ENCODE measurements at regions of chr12 and their contacts with region 1.

Region 1: DNA sequence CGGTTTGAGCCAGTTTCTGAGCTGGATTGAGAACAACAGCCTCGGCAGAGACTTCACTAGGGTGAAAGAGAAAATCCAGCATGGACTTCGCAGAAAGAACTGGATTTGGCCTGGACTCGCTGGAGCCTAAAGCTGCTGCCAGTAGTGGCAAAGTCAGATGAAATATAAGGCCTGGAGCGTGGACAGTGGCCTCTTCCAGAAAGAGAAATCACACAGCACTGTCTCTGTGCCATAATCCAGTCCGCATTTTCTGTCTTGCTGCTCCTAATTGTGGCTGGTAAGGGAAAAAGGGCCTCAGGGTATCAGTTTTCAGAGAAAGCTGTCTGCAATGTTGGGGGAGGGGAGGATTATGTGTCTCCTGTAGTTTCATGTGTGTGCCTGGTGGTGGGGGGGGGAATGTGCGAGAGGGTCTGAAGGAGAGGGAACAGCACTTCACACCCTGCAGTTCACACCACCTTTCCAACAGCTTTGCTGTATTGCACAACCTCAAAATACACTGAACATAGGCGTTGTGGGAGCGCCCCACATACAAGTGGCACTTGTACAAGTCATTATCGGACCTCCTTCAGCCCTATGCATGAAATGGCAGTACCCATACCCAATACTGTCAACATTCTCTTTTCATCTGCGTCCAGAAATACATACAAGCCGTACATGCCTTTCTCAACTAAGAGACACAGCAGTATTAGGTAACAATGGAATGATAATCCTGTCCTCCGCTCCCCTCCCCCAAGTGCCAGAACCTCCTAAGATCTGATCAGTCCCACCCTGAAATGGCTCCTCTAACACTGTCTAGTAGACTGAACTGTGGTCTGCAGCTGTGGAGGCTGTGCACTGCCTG is 107.5 kb upstream of the ATF7IP start:
- DNase-seq: peak; percentile 48
- CTCF ChIP-seq: no peak

Region 2: DNA sequence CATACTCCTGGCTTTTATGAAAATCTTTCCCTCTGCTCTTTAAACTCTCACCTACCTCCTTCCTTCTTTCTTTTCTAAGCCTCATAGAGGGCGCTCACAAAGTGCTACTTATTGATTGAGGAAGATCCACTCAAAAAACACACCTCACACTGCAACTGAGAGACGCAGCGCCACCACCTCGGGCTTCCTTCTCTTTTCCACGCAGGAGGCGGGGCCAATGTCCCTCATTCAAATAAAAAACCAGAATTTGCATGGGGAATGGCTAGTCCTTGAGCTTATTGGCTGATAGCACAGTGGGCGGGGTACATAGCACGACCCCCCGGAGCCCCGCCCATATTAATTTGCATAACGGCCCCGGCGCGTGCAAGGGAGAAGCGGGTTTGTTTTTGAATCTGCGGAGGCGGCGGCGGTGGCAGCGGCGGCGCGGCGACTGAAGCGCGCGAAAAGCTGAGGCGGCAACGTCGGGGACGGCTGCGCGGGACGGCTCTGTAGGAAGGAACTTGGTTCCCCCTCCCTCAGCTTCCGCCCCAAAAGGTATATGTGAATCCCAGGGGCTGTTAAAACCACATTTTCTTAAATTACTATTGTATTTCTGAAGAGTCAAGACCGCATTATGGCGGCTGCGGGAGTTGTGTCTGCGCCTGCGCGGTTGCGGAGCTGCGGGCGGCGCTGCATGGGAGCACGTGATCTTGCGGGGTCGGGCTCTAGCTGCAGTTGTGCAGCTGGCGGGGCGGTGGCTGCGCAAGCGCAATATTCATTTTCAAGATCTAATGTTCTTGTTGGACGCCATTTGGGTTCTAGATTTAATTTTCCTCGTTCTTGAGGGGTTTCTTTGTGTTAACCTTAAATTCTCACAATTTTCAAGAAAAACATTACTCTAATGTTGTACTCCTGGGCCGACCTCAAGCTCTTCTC is 107.6 kb after region 1 on chr12 and contains the start of gene ATF7IP:
- in situ Hi-C with region 1: loop called (anchors 10 kb)
- DNase-seq: peak; percentile 88
- CTCF ChIP-seq: peak; percentile 48

Region 3: GRCh38 chr12:14454098-14454907 is 196.3 kb after region 1 on chr12:
- in situ Hi-C with region 1: no loop called
- DNase-seq: peak; percentile 46
- CTCF ChIP-seq: peak; percentile 65